ENCODE measurements at regions of chr12 and their contacts with region 1.

Region 1: GRCh38 chr12:49223590-49224369 is 34.9 kb upstream of the TUBA1A start:
- DNase-seq: no peak
- H3K4me3 ChIP-seq: no peak overlapping the region
- H3K27ac ChIP-seq: no peak overlapping the region
- H3K4me1 ChIP-seq: peaks cover 0 to 38% (median 7%) of the 10 kb centered on the region in 4 experiments
- H3K27me3 ChIP-seq: no peaks in the 10 kb centered on the region

Region 2: GRCh38 chr12:49200919-49201594 is 22.7 kb before region 1 on chr12:
- CTCF ChIA-PET with region 1: interaction called, 12 read pairs
- POLR2A ChIA-PET with region 1: interaction called, 3 read pairs
- DNase-seq: peak; percentile 77 to 94 (median 91)
- H3K4me3 ChIP-seq: peak overlapping the region in 3 of 7 experiments; percentile 11 to 58 (median 48)
- H3K27ac ChIP-seq: peak overlapping the region; percentile 74 to 90
- H3K4me1 ChIP-seq: peaks cover 10 to 36% (median 25%) of the 10 kb centered on the region in 4 experiments
- H3K27me3 ChIP-seq: no peaks in the 10 kb centered on the region

Region 3: GRCh38 chr12:49389387-49389703 is 165.6 kb after region 1 on chr12:
- CTCF ChIA-PET with region 1: no interaction called
- POLR2A ChIA-PET with region 1: interaction called, 12 read pairs
- DNase-seq: no peak
- H3K4me3 ChIP-seq: peak overlapping the region in 3 of 7 experiments; percentile 37 to 57 (median 42)
- H3K27ac ChIP-seq: no peak overlapping the region
- H3K4me1 ChIP-seq: peaks cover 0 to 7% (median 0%) of the 10 kb centered on the region in 4 experiments
- H3K27me3 ChIP-seq: no peaks in the 10 kb centered on the region